ENCODE measurements at regions of chr5 and their contacts with region 1.

Region 1: DNA sequence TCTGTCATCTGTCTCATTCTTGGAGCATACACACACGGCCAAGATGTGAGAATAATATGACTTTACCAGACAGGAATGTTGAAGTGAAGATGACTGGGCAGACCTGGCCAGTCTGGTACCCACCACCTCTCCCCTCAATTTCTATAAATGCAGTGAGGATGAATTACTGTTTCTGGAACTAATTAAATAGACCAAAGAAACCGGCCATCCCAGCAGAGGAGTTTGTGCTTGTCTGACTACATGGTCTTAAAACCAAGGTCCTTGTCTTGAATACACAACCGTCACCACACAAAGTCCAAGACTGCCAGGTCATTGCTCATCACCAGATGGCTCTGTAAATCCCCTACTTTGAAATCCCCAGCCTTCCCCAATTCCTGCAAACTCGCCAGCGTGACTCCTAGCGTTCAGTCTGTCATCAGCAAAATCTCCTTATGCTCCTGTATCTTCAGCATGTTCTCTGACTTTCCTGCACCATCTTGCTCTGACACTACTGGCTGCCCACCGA is 147.2 kb downstream of the PDE4D start:
- DNase-seq: no peak
- ATAC-seq: no peak
- H3K4me3 ChIP-seq: no peak overlapping the region
- H3K4me3 Mint-ChIP-seq: no peak overlapping the region
- H3K27ac ChIP-seq: no peak overlapping the region
- H3K27ac Mint-ChIP-seq: no peak overlapping the region
- H3K4me1 ChIP-seq: peaks cover 0 to 3% of the 10 kb centered on the region in 2 experiments
- H3K4me1 Mint-ChIP-seq: no peaks in the 10 kb centered on the region
- H3K27me3 ChIP-seq: no peaks in the 10 kb centered on the region
- H3K27me3 Mint-ChIP-seq: no peaks in the 10 kb centered on the region

Region 2: GRCh38 chr5:58875599-58875998 is 870.7 kb before region 1 on chr5:
- CTCF ChIA-PET with region 1: interaction called in 1 of 2 experiments, 10 read pairs
- POLR2A ChIA-PET with region 1: no interaction called
- DNase-seq: no peak
- ATAC-seq: no peak
- H3K4me3 ChIP-seq: no peak overlapping the region
- H3K4me3 Mint-ChIP-seq: no peak overlapping the region
- H3K27ac ChIP-seq: no peak overlapping the region
- H3K27ac Mint-ChIP-seq: no peak overlapping the region
- H3K4me1 ChIP-seq: no peaks in the 10 kb centered on the region
- H3K4me1 Mint-ChIP-seq: no peaks in the 10 kb centered on the region
- H3K27me3 ChIP-seq: peaks cover 0 to 2% of the 10 kb centered on the region in 2 experiments
- H3K27me3 Mint-ChIP-seq: peaks cover 12 to 20% of the 10 kb centered on the region in 2 donors